H1 (cell line): ENCODE measurements at regions of chr11 and their contacts with region 1.

Region 1: GRCh38 chr11:108008656-108009496 is at the start of gene CUL5:
- DNase-seq: peak; percentile 62 to 96
- H3K4me3 ChIP-seq: peak within 1 kb of the TSS; percentile 79 to 100 (median 95)
- H3K27ac ChIP-seq: peak within 1 kb of the TSS; percentile 92
- H3K4me1 ChIP-seq: peaks cover 0 to 4% (median 3%) of the 10 kb centered on the region in 4 experiments; a peak in 4 of 7 replicates
- H3K27me3 ChIP-seq: no peaks in the 10 kb centered on the region
- CTCF ChIP-seq: peak; percentile 82 to 92 (median 91)
- EP300 ChIP-seq: no peak
- POLR2A ChIP-seq: peak; percentile 94 to 98
- RAD21 ChIP-seq: peak; percentile 60 to 71
- total RNA-seq, gene CUL5: 31.8 and 32.0 TPM in 2 replicates

Region 2: DNA sequence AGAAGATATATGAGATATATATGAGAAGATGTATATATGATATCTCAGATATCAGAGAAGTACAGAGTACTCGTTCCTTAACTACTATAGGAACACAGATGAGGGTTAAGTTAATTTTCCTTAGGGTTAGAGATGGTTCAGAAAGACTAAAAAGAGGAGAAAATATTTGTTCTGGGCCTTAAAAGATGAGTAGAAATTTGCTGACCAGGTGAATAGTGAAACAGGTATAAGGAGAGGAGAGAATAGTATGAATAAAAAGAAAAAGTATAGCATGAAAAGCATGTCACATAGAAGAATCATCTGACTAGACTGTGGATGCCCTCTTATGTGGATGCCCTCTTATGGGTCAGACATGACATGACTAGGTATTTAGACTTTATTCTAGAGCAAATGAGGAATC is 86.9 kb before region 1 on chr11:
- CTCF ChIA-PET with region 1: no interaction called
- POLR2A ChIA-PET with region 1: no interaction called
- DNase-seq: no peak
- H3K4me3 ChIP-seq: no peak overlapping the region
- H3K27ac ChIP-seq: no peak overlapping the region
- H3K4me1 ChIP-seq: no peaks in the 10 kb centered on the region
- H3K27me3 ChIP-seq: no peaks in the 10 kb centered on the region
- CTCF ChIP-seq: no peak
- EP300 ChIP-seq: no peak
- POLR2A ChIP-seq: no peak
- RAD21 ChIP-seq: no peak

Region 3: DNA sequence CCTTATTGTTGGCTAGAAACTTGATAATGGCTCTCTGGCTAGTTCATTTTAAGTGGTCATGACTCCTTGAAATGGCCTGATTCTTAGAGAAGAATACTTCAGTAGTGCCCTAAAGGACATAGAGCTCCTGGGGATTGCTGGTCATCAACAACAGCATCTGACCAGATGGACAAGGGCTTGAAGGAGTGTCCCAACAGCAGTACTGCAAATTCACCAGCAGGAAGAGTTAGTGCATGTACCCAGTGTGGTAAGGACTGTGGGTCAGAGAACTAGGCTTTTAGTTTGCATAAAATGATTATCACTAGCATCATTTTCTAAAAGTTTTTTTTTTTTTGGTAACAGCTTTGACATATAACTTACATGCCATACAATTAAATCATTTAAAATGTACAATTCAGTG is 39.7 kb before region 1 on chr11:
- CTCF ChIA-PET with region 1: interaction called, 11 read pairs
- POLR2A ChIA-PET with region 1: interaction called, 6 read pairs
- DNase-seq: no peak
- H3K4me3 ChIP-seq: no peak overlapping the region
- H3K27ac ChIP-seq: no peak overlapping the region
- H3K4me1 ChIP-seq: peaks cover 0 to 4% (median 0%) of the 10 kb centered on the region in 4 experiments; a peak in 1 of 7 replicates
- H3K27me3 ChIP-seq: no peaks in the 10 kb centered on the region
- CTCF ChIP-seq: peak in 2 of 3 experiments; percentile 29 to 58; a peak in 1 of 4 replicates
- EP300 ChIP-seq: no peak
- POLR2A ChIP-seq: no peak
- RAD21 ChIP-seq: peak in 1 of 2 experiments; percentile 14; a peak in 2 of 4 replicates

Region 4: GRCh38 chr11:108019870-108020540 is 11.1 kb after region 1 on chr11:
- CTCF ChIA-PET with region 1: interaction called, 57 read pairs
- POLR2A ChIA-PET with region 1: interaction called, 22 read pairs
- DNase-seq: no peak
- H3K4me3 ChIP-seq: no peak overlapping the region
- H3K27ac ChIP-seq: no peak overlapping the region
- H3K4me1 ChIP-seq: peaks cover 0 to 7% (median 3%) of the 10 kb centered on the region in 4 experiments; a peak in 3 of 7 replicates
- H3K27me3 ChIP-seq: no peaks in the 10 kb centered on the region
- CTCF ChIP-seq: no peak
- EP300 ChIP-seq: no peak
- POLR2A ChIP-seq: no peak
- RAD21 ChIP-seq: no peak

Region 5: DNA sequence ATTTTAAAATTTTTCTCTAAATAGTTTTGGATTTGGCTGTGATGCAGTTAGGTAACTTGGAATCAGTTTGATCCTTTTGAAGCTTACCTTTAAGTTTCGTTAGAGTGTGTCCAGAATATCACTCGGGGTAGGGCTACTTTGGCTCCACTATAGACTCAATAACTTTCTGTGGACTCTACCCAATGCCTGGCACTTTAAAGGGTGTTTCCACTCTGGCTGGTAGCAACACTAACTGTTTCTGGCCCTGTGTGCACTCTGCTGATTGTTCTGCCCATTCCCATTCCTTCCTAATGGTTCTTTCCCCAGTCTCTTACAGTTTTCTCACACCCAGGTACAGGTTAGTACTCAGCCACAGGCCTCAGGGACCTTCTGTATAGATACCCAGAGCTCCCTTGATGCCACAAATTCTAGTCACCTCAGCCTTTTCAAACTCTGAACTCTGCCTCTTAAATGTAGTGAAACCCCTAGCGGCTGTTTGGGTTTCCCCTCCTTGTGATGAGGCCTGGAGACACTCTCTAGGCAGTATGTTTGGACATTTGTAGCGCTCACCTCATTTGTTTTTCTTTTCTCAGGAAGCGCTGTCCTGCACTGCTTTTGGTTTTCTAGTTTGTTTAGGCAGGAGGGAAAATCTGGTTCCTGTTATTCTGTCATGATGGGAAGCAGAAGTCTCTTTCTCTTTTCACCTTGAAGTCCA is 16.7 kb after region 1 on chr11:
- CTCF ChIA-PET with region 1: interaction called, 57 read pairs
- POLR2A ChIA-PET with region 1: interaction called, 22 read pairs
- DNase-seq: no peak
- H3K4me3 ChIP-seq: no peak overlapping the region
- H3K27ac ChIP-seq: no peak overlapping the region
- H3K4me1 ChIP-seq: no peaks in the 10 kb centered on the region
- H3K27me3 ChIP-seq: no peaks in the 10 kb centered on the region
- CTCF ChIP-seq: no peak
- EP300 ChIP-seq: no peak
- POLR2A ChIP-seq: no peak
- RAD21 ChIP-seq: no peak

Region 6: GRCh38 chr11:108213784-108214183 is 204.9 kb after region 1 on chr11:
- CTCF ChIA-PET with region 1: no interaction called
- POLR2A ChIA-PET with region 1: no interaction called
- DNase-seq: no peak
- H3K4me3 ChIP-seq: no peak overlapping the region
- H3K27ac ChIP-seq: no peak overlapping the region
- H3K4me1 ChIP-seq: peaks cover 0 to under 1% (median 0%) of the 10 kb centered on the region in 4 experiments; a peak in 2 of 7 replicates
- H3K27me3 ChIP-seq: no peaks in the 10 kb centered on the region
- CTCF ChIP-seq: no peak
- EP300 ChIP-seq: no peak
- POLR2A ChIP-seq: no peak
- RAD21 ChIP-seq: no peak